HEK293 (cell line): ENCODE measurements at regions of chrX and their contacts with region 1.

Region 1: GRCh38 chrX:84358271-84358670 is 144.0 kb downstream of the HDX start:
- H3K4me3 ChIP-seq: no peak overlapping the region
- H3K27ac ChIP-seq: no peak overlapping the region
- H3K4me1 ChIP-seq: no peaks in the 10 kb centered on the region
- CTCF ChIP-seq: no peak

Region 2: DNA sequence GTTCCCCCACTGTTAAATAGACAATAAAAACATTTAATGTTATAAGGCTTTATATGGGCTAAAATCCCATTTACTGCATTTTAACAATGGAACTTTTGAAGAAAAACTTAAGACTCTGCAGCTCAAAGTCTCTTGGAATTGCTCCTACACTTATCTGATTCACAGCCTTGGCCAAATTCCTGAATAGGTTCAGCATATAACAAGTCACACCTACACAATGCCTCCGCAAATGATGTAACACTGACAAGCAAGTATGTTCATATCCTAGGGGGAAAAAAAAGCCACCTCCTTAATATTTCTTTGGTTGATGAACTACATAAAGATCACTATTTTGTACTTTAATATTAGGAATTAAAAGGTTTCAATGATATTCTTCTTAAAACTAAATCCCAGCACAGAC is 204.7 kb before region 1 on chrX:
- CTCF ChIA-PET with region 1: no interaction called
- POLR2A ChIA-PET with region 1: no interaction called
- H3K4me3 ChIP-seq: no peak overlapping the region
- H3K27ac ChIP-seq: no peak overlapping the region
- H3K4me1 ChIP-seq: no peaks in the 10 kb centered on the region
- CTCF ChIP-seq: no peak

Region 3: DNA sequence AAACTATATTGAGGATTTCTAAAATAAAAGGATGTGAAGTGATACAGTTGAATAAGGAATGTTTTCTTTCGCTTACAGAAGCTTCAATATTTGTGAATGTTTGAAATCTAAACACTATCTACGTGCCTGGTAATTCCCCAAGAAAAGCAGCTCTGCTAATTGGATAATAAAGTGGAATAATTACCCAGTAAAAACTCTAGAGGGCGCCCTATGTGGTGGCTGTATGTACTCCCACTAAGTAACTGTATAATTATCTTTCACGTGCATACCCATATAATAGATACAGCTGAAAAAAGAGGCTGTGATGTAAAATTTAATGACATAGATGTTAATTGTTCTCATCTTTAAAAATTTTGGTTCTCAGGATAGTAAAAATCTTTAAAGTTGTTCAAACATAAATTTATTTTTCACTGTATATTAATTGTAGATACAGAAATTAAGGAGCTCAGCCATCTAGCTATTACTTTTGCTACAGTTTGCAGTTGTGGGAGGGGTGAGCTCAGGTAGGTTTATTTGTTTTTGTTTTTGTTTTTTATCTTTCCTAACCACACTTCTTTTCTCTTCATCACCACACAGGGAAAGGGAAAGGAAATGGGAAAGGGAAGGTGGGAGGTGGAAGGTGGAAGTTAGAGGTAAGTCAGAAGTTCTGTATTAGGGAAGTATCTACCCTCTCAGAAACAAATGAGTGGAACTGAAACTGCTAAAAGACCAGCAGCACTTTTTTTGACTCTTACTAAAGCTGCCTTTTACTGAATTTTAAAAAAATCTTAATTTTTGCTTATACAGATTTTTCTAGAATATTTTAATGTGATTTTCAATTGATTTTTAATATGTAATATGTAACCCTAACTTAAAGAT is 18.5 kb before region 1 on chrX:
- CTCF ChIA-PET with region 1: interaction called, 17 read pairs
- POLR2A ChIA-PET with region 1: no interaction called
- H3K4me3 ChIP-seq: no peak overlapping the region
- H3K27ac ChIP-seq: no peak overlapping the region
- H3K4me1 ChIP-seq: no peaks in the 10 kb centered on the region
- CTCF ChIP-seq: no peak

Region 4: DNA sequence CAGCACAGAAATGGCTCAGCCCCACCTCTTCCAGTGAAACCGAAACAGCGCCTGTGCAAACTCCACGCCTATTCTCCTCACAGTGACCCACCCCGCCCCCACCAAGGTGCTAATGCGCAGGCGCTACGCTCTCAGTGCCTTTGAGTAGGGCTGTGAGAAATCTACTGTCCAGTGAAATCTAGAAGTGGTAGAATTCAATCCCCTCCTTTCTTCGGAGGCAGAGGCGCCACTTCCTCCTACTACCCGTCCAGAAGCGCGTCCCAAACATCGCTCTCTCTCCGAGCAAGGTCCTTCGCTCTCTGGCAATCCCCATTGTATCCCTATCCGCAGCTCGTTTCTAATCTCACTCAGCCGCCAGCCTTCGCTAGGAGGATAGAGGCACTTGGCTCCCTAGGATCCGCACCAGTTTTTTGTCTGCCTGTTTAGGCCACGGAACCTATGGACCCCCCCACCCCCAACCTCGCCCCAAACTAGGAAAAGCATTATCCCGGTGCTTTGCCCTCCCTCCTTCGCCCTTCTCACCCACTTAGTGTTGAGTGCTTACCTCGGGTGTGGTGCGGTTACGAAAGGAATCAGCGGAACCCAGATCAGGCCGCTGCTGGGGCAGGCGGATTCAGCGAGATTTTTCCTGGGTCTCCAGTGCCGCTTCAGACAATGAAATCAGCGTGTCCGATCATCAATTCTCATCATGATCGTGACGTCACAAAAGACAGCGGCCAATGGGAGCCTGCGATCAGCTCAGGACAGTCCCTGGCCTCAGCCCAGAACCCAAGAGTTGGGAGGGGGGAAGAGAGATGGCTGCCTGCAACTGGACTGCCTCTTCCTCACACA is 143.7 kb after region 1 on chrX and contains the start of gene HDX:
- CTCF ChIA-PET with region 1: no interaction called
- POLR2A ChIA-PET with region 1: no interaction called
- H3K4me3 ChIP-seq: peak within 1 kb of the TSS; percentile 48
- H3K27ac ChIP-seq: peak within 1 kb of the TSS; percentile 67
- H3K4me1 ChIP-seq: no peaks in the 10 kb centered on the region
- CTCF ChIP-seq: no peak